ENCODE measurements at regions of chr2 and their contacts with region 1.

Region 1: DNA sequence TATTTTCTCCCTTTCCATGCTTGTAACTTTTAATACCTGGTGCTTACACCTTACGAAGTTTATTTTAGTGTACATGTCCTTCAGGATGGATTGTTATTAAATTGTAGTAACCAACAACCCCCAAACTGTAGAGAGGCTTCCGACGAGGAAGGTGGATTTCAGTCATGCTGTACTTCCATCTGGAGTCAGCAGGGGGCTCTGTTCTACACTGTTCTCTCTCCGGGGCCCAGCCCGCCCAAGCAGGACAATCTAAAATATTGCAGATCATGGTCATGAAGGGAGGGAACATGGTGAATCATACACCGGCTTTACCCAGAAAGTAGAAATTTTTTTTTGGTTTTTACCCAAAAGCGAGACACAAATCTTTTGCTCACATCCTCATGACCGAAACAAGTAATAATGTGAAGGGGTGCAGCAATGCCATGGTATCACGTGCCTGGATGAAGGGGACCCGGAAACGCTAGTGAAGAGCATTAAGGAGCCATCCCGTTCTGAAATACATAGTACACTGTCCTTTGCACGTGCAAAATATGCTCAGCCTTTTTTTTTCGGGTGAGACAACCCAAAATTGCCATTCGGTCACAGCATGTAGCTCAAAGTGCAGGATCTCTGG is 884.8 kb downstream of the EPHA4 start:
- DNase-seq: peak; percentile 31
- ATAC-seq: peak; percentile 97
- H3K4me3 Mint-ChIP-seq: no peak overlapping the region
- H3K27ac Mint-ChIP-seq: no peak overlapping the region
- H3K4me1 Mint-ChIP-seq: peaks cover 13% of the 10 kb centered on the region
- H3K27me3 Mint-ChIP-seq: peaks cover 8% of the 10 kb centered on the region
- CTCF ChIP-seq: peak; percentile 61

Region 2: GRCh38 chr2:220708366-220708765 is 21.0 kb after region 1 on chr2:
- CTCF ChIA-PET with region 1: no interaction called
- POLR2A ChIA-PET with region 1: no interaction called
- intact Hi-C with region 1: no loop called
- DNase-seq: no peak
- ATAC-seq: no peak
- H3K4me3 Mint-ChIP-seq: no peak overlapping the region
- H3K27ac Mint-ChIP-seq: no peak overlapping the region
- H3K4me1 Mint-ChIP-seq: no peaks in the 10 kb centered on the region
- H3K27me3 Mint-ChIP-seq: no peaks in the 10 kb centered on the region
- CTCF ChIP-seq: no peak

Region 3: DNA sequence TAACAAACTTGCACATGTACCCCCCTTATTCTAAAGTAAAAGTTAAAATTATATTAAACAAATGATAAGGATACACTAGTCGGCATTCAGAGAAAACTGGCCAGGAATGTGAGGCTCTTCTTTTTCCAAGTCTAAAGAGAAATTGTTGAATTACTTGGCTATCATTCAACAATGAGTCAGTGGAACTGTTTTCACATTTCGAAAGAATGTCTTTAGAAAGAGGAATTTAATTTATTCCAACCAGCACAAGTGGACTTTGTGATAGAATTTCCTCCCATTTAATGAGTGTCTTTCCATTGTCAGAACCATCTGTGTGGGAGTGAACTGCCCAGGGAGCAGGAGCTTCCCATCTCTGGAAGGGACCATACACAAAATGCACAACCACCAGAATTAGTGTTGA is 92.6 kb after region 1 on chr2:
- CTCF ChIA-PET with region 1: no interaction called
- POLR2A ChIA-PET with region 1: no interaction called
- intact Hi-C with region 1: no loop called
- DNase-seq: no peak
- ATAC-seq: no peak
- H3K4me3 Mint-ChIP-seq: no peak overlapping the region
- H3K27ac Mint-ChIP-seq: no peak overlapping the region
- H3K4me1 Mint-ChIP-seq: no peaks in the 10 kb centered on the region
- H3K27me3 Mint-ChIP-seq: no peaks in the 10 kb centered on the region
- CTCF ChIP-seq: no peak

Region 4: DNA sequence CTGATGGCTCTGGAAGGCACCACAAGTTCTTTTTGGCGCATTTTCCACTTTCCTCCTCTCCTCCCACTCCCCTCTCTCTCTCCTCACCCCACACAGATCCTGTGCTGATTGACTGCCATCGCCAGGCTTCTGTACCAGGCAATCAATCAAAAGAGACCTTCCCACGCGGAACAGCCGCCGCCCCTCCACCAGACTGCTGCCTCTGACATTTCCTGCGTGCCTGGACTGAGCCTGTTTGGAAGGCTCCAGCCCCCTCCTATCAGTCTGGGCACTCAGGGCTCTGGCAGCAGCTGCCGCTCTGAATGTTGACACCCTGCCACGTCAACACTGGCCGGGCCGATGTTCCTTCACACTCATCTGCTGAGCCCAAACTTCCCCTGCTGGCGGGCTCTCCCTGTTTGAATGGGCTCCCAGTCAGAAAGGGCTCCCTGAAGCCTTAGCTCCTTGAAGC is 417.0 kb after region 1 on chr2:
- CTCF ChIA-PET with region 1: no interaction called
- POLR2A ChIA-PET with region 1: no interaction called
- intact Hi-C with region 1: loop called (anchors 2 kb)
- DNase-seq: no peak
- ATAC-seq: no peak
- H3K4me3 Mint-ChIP-seq: peak overlapping the region; percentile 33
- H3K27ac Mint-ChIP-seq: no peak overlapping the region
- H3K4me1 Mint-ChIP-seq: peaks cover 14% of the 10 kb centered on the region
- H3K27me3 Mint-ChIP-seq: peaks cover 10% of the 10 kb centered on the region
- CTCF ChIP-seq: no peak

Region 5: GRCh38 chr2:221465776-221466175 is 778.4 kb after region 1 on chr2:
- CTCF ChIA-PET with region 1: no interaction called
- POLR2A ChIA-PET with region 1: no interaction called
- intact Hi-C with region 1: loop called (anchors 5 kb)
- DNase-seq: peak; percentile 16
- ATAC-seq: peak; percentile 82
- H3K4me3 Mint-ChIP-seq: peak overlapping the region; percentile 71
- H3K27ac Mint-ChIP-seq: peak overlapping the region; percentile 72
- H3K4me1 Mint-ChIP-seq: peaks cover 60% of the 10 kb centered on the region
- H3K27me3 Mint-ChIP-seq: no peaks in the 10 kb centered on the region
- CTCF ChIP-seq: no peak

Region 6: DNA sequence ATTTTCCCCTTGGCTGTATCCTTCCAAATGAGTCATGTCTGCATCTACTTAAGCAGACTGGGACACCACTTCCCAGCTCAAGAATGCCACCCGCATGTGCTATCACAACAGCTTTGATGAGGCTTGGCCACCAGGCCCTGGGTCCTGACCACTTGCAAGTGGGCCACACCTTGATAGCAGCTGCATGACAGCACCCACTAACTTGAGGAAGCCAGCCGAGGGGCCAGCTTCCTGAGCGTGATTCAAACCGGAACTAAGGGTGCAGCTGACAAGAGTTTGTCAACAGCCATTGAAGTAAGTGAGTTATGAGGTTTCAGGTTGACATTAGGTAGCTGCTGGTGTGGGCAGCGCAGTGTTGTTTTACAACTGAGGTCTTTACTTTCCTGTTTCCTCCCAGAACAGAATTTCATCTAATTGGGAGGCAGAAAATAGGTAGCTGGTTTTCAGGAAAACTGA is 830.4 kb after region 1 on chr2:
- CTCF ChIA-PET with region 1: no interaction called
- POLR2A ChIA-PET with region 1: no interaction called
- intact Hi-C with region 1: loop called (anchors 2 kb)
- DNase-seq: peak; percentile 32
- ATAC-seq: peak; percentile 76
- H3K4me3 Mint-ChIP-seq: no peak overlapping the region
- H3K27ac Mint-ChIP-seq: no peak overlapping the region
- H3K4me1 Mint-ChIP-seq: peaks cover 14% of the 10 kb centered on the region
- H3K27me3 Mint-ChIP-seq: no peaks in the 10 kb centered on the region
- CTCF ChIP-seq: no peak

Region 7: GRCh38 chr2:221969087-221969829 is 1281.9 kb after region 1 on chr2:
- CTCF ChIA-PET with region 1: no interaction called
- POLR2A ChIA-PET with region 1: no interaction called
- intact Hi-C with region 1: loop called (anchors 1 kb)
- DNase-seq: no peak
- ATAC-seq: no peak
- H3K4me3 Mint-ChIP-seq: no peak overlapping the region
- H3K27ac Mint-ChIP-seq: no peak overlapping the region
- H3K4me1 Mint-ChIP-seq: no peaks in the 10 kb centered on the region
- H3K27me3 Mint-ChIP-seq: peaks cover 1% of the 10 kb centered on the region
- CTCF ChIP-seq: no peak